ENCODE measurements at regions of chr2 and their contacts with region 1.

Region 1: DNA sequence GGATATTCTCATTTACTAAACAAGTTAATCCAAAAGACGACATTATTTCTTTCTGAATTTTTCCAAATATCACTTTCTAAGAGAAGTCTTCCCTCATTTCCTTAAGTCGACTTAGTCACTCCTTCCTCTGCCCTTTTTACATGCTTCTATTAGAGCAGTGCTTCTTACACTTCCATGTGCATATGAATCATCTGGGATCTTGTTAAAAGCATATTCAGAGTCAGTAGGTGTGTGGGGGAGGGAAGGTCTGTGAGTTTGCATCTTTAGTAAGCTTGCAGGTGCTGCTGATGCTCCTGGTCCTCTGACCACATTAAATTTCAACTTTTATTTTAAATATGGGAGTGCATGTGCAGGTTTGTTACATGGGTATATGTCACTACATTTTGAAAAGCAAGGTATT is 582.6 kb downstream of the NRXN1 start:
- DNase-seq: no peak
- ATAC-seq: no peak
- H3K4me3 ChIP-seq: no peak overlapping the region
- H3K27ac ChIP-seq: no peak overlapping the region
- H3K4me1 ChIP-seq: no peaks in the 10 kb centered on the region
- H3K27me3 ChIP-seq: peaks cover 0 to 3% (median 0%) of the 10 kb centered on the region in 7 donors
- CTCF ChIP-seq: no peak

Region 2: GRCh38 chr2:50641633-50642032 is 192.3 kb after region 1 on chr2:
- intact Hi-C with region 1: no loop called
- DNase-seq: no peak
- ATAC-seq: no peak
- H3K4me3 ChIP-seq: no peak overlapping the region
- H3K27ac ChIP-seq: no peak overlapping the region
- H3K4me1 ChIP-seq: no peaks in the 10 kb centered on the region
- H3K27me3 ChIP-seq: no peaks in the 10 kb centered on the region
- CTCF ChIP-seq: no peak

Region 3: GRCh38 chr2:50751311-50752069 is 302.2 kb after region 1 on chr2:
- intact Hi-C with region 1: no loop called
- DNase-seq: no peak
- ATAC-seq: no peak
- H3K4me3 ChIP-seq: no peak overlapping the region
- H3K27ac ChIP-seq: no peak overlapping the region
- H3K4me1 ChIP-seq: peaks cover 0 to 3% (median 0%) of the 10 kb centered on the region in 9 donors
- H3K27me3 ChIP-seq: no peaks in the 10 kb centered on the region
- CTCF ChIP-seq: no peak

Region 4: DNA sequence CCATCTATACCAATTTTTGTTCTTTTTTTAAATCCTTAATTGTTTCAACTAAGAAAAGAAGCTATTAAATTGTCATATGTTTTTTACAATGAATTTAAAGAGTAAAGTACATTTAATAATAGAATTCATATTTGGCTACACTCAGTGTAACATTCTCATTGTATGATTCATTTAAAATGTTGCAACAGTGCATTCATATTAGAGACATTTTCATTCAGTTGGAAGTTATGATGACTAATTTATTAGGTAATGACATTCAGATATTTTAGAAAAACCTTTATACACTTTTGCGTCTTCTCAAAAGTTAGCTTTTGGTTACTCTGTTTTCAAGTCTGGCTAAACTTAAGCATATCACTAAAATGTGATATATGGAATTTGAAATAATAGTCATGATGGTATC is 1470.1 kb after region 1 on chr2:
- intact Hi-C with region 1: loop called in 1 of 10 experiments (anchors 5 kb)
- DNase-seq: no peak
- ATAC-seq: no peak
- H3K4me3 ChIP-seq: no peak overlapping the region
- H3K27ac ChIP-seq: no peak overlapping the region
- H3K4me1 ChIP-seq: no peaks in the 10 kb centered on the region
- H3K27me3 ChIP-seq: no peaks in the 10 kb centered on the region
- CTCF ChIP-seq: no peak

Measured in heart right ventricle (tissue), 16 donors.